ENCODE measurements at regions of chr14 and their contacts with region 1.

Region 1: GRCh38 chr14:94136575-94137331 is 7.3 kb upstream of the IFI27L2 start:
- DNase-seq: peak; percentile 76
- ATAC-seq: peak; percentile 98
- H3K4me3 ChIP-seq: no peak overlapping the region
- H3K27ac ChIP-seq: no peak overlapping the region
- H3K4me1 ChIP-seq: no peaks in the 10 kb centered on the region
- H3K27me3 ChIP-seq: peaks cover 17% of the 10 kb centered on the region
- CTCF ChIP-seq: peak; percentile 98
- POLR2A ChIP-seq: peak; percentile 29; the same call in 1 of the 2 replicates
- RAD21 ChIP-seq: peak; percentile 98

Region 2: DNA sequence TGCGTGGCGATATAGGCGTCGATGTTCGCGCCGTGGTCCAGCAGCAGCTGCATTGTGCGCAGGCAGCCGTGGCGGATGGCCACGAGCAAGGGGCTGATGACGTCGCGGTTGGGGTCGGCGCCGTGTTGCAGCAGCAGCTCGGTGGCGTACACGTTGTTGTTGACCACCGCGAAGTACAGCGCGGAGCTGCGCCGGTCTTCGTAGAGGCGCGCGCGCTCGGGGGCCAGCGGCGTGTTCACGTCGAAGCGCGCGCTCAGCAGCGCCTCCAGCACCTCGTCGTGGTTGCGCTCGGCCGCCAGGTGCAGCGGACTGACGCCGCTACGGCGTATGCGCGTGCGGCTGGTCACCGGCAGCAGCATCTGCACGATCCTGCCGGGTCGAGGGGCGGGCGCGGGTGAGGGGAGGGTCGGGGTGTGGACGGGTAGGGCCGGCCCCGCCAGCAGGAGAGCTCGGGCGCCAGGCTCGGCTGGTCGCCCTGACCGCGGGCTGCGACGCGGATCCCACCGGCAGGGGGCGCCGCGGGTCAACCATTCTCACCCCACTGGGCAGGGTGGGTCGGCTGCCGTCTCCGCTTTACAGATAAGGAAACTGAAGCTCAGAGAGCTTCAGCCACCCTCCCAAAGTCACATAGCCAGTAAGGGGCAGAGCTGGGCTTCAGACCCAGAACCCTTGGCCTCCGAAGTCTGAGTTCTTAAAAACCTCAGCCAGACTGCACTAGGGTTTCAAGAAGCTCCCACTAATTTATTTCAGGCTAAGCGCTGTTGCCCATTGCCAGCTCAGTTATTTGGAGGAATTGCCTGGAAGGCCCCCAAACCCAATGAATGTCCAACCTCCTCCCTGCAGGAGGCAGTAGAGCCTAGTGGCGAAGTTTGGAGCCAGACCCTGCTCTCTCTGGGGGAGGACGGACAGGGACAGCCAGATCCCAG is 197.2 kb before region 1 on chr14:
- CTCF ChIA-PET with region 1: interaction called, 10 read pairs
- POLR2A ChIA-PET with region 1: no interaction called
- dilution Hi-C with region 1: no loop called
- in situ Hi-C with region 1: loop called (anchors 10 kb)
- intact Hi-C with region 1: loop called (anchors 1 kb)
- DNase-seq: peak; percentile 67
- ATAC-seq: peak; percentile 90
- H3K4me3 ChIP-seq: peak overlapping the region; percentile 39
- H3K27ac ChIP-seq: no peak overlapping the region
- H3K4me1 ChIP-seq: peaks cover 7% of the 10 kb centered on the region
- H3K27me3 ChIP-seq: peaks cover 31% of the 10 kb centered on the region; the same call in 1 of the 2 replicates
- CTCF ChIP-seq: peak; percentile 98
- POLR2A ChIP-seq: peak; percentile 51; the same call in 1 of the 2 replicates
- RAD21 ChIP-seq: peak; percentile 94

Region 3: DNA sequence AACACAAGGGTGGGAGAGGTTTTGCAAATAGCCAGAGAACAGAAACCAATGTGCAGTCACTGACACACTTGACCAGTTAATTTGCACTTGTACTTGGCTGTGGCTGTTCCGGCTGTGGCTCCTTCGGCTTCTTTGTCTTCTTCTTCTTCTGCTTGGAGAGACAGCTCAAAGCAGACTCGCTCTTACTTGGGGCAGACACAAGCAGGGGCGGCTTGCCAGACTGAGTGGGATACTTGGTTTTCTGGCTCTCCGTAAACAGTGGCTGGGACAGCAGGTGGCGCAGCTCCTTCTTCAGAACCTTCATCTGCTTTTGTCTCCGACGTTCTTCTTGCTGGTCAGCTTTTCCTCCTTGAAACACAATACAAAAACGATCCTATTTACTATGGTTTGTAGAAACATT is 85.6 kb before region 1 on chr14:
- CTCF ChIA-PET with region 1: interaction called, 35 read pairs
- POLR2A ChIA-PET with region 1: no interaction called
- dilution Hi-C with region 1: no loop called
- in situ Hi-C with region 1: no loop called
- intact Hi-C with region 1: loop called (anchors 1 kb)
- DNase-seq: peak; percentile 42
- ATAC-seq: peak; percentile 52; the same call in 1 of the 2 replicates
- H3K4me3 ChIP-seq: no peak overlapping the region
- H3K27ac ChIP-seq: no peak overlapping the region
- H3K4me1 ChIP-seq: no peaks in the 10 kb centered on the region
- H3K27me3 ChIP-seq: no peaks in the 10 kb centered on the region
- CTCF ChIP-seq: peak; percentile 41
- POLR2A ChIP-seq: no peak
- RAD21 ChIP-seq: peak; percentile 49

Region 4: GRCh38 chr14:94100847-94101246 is 35.9 kb before region 1 on chr14:
- CTCF ChIA-PET with region 1: interaction called, 11 read pairs
- POLR2A ChIA-PET with region 1: no interaction called
- dilution Hi-C with region 1: no loop called
- in situ Hi-C with region 1: no loop called
- intact Hi-C with region 1: no loop called
- DNase-seq: peak; percentile 82
- ATAC-seq: peak; percentile 99
- H3K4me3 ChIP-seq: no peak overlapping the region
- H3K27ac ChIP-seq: no peak overlapping the region
- H3K4me1 ChIP-seq: peaks cover 5% of the 10 kb centered on the region; the same call in 1 of the 2 replicates
- H3K27me3 ChIP-seq: no peaks in the 10 kb centered on the region
- CTCF ChIP-seq: no peak
- POLR2A ChIP-seq: no peak
- RAD21 ChIP-seq: no peak

Region 5: DNA sequence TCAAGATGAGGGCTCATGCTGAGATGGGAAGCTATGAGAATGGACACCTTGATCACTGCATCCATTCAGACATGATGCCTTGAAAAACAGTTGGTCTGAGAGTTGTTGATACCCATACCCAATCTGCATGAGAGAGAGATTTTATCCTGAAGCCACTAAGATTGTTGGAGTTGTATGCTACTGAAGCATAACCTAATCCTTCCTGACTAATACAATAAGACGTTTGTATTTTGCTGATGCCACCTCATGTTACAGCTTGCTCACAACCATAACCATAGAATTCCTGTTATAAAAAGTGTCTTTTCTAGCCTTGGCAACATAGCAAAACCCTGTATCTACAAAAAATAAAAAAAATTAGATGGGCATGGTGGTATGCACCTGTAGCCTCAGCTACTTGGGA is 264.3 kb after region 1 on chr14:
- CTCF ChIA-PET with region 1: no interaction called
- POLR2A ChIA-PET with region 1: no interaction called
- dilution Hi-C with region 1: no loop called
- in situ Hi-C with region 1: no loop called
- intact Hi-C with region 1: no loop called
- DNase-seq: peak; percentile 68
- ATAC-seq: peak; percentile 32
- H3K4me3 ChIP-seq: no peak overlapping the region
- H3K27ac ChIP-seq: no peak overlapping the region
- H3K4me1 ChIP-seq: no peaks in the 10 kb centered on the region; the same call in 1 of the 2 replicates
- H3K27me3 ChIP-seq: no peaks in the 10 kb centered on the region; the same call in 1 of the 2 replicates
- CTCF ChIP-seq: no peak
- POLR2A ChIP-seq: no peak
- RAD21 ChIP-seq: no peak

Measured in IMR-90 (cell line).